ENCODE measurements at regions of chr17 and their contacts with region 1.

Region 1: GRCh38 chr17:7561028-7561575 is 617 bp upstream of the SENP3 start:
- DNase-seq: peak; percentile 93
- ATAC-seq: peak; percentile 65
- H3K4me3 Mint-ChIP-seq: peak overlapping the region; percentile 94
- H3K27ac Mint-ChIP-seq: peak overlapping the region; percentile 97
- H3K4me1 Mint-ChIP-seq: peaks cover 53% of the 10 kb centered on the region
- H3K27me3 Mint-ChIP-seq: no peaks in the 10 kb centered on the region
- CTCF ChIP-seq: peak; percentile 46; the same call in 1 of the 2 replicates

Region 2: DNA sequence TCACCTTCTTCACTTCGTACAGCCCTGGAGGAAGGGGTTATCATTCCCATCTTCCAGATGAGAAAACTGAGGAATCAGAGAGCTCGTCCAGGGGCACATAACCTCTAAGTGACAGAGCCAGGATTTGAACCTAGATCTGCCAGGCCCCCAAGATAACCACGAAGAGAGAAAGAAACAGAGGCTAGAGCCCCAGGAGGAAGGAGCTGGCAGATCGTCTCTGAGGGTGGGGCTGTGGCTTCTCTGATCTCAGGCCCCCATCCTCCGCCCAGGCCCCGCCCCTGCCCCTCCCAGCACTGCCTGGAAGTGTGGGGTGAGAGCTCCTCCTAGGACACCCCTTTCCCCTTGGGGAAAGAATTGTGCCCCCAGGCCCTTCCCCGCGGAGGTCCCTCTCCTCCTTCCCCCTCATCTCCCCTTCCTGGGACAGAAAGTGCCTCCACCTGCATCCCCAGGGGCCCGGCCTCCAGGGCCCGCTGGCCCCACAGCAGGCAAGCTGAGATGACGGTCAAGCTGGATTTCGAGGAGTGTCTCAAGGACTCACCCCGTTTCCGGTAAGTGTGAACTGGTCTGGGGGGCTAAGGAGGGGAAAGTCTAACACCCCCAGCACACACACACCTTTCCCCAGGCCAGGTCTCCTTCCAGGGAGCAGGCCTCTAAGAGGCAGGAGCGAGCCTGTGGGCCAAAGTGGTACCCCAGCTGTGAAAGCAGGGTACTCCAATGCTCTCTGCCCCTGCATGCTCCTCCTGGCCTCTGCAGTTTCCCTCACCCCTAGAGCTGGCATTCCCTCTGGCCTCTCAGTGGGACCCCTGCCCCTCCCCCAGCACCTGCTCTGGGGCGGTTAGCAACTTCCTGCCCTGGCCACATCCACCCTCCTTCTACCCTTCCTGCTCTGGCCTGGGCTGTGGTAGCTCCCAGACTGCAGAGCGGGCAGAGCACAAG is 224.6 kb before region 1 on chr17 and contains the start of gene ACAP1:
- CTCF ChIA-PET with region 1: interaction called, 12 read pairs
- POLR2A ChIA-PET with region 1: interaction called, 4 read pairs
- DNase-seq: peak; percentile 78
- ATAC-seq: peak; percentile 96
- H3K4me3 Mint-ChIP-seq: peak within 1 kb of the TSS; percentile 63
- H3K27ac Mint-ChIP-seq: peak within 1 kb of the TSS; percentile 98
- H3K4me1 Mint-ChIP-seq: peaks cover 34% of the 10 kb centered on the region
- H3K27me3 Mint-ChIP-seq: no peaks in the 10 kb centered on the region
- CTCF ChIP-seq: no peak
- total RNA-seq, gene ACAP1: 58.6 to 63.9 TPM (median 60.6 TPM) in 3 replicates

Region 3: DNA sequence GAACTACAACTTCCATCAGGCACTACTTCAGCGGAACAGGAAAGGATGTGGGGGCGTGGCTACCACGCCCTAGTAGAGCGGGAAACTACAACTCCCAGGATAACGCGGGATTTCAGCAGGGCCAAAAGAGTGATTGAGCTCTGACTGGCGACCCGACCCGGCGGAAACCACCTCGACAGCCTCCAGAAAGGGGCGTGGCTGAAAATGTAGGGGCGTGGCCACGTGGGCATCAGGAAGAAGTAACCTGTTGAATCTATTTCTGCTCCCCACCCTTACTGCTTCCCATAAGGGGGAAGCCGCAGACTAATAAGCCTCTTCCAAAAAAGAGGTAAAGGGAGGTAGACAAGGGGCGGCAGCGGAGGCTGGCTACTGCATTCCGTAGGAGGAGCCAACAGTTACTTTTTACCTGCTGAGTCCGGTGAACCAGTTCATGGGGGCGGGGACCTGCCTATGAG is 125.9 kb before region 1 on chr17 and contains the start of gene TMEM102:
- CTCF ChIA-PET with region 1: interaction called, 39 read pairs
- POLR2A ChIA-PET with region 1: interaction called, 3 read pairs
- DNase-seq: peak; percentile 98
- ATAC-seq: peak; percentile 71
- H3K4me3 Mint-ChIP-seq: peak within 1 kb of the TSS; percentile 90
- H3K27ac Mint-ChIP-seq: peak within 1 kb of the TSS; percentile 98
- H3K4me1 Mint-ChIP-seq: peaks cover 17% of the 10 kb centered on the region
- H3K27me3 Mint-ChIP-seq: peaks cover 17% of the 10 kb centered on the region
- CTCF ChIP-seq: no peak
- total RNA-seq, gene TMEM102: 13.5 to 15.3 TPM (median 13.9 TPM) in 3 replicates

Region 4: DNA sequence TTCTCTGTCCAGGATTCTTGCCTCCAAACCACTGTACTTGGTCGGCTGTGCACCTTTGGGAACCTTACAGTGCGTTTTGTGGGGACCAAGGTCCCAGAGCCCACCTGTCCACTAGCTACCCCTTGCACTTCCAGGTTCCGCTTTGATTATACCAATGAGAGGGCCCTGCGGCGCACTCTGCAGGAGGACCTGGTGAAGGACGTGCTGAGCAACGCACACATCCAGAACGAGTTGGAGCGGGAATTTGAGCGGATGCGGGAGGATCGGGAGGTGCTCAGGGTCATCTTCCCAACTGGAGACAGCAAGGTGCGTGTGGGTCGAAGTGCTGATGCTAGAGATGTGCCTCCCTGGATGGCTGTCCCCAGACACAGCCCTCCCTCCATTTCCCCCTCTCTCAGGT is 58.1 kb before region 1 on chr17:
- CTCF ChIA-PET with region 1: interaction called, 10 read pairs
- POLR2A ChIA-PET with region 1: interaction called, 4 read pairs
- DNase-seq: peak; percentile 66
- ATAC-seq: peak; percentile 82
- H3K4me3 Mint-ChIP-seq: no peak overlapping the region
- H3K27ac Mint-ChIP-seq: no peak overlapping the region
- H3K4me1 Mint-ChIP-seq: no peaks in the 10 kb centered on the region
- H3K27me3 Mint-ChIP-seq: no peaks in the 10 kb centered on the region
- CTCF ChIP-seq: no peak

Region 5: DNA sequence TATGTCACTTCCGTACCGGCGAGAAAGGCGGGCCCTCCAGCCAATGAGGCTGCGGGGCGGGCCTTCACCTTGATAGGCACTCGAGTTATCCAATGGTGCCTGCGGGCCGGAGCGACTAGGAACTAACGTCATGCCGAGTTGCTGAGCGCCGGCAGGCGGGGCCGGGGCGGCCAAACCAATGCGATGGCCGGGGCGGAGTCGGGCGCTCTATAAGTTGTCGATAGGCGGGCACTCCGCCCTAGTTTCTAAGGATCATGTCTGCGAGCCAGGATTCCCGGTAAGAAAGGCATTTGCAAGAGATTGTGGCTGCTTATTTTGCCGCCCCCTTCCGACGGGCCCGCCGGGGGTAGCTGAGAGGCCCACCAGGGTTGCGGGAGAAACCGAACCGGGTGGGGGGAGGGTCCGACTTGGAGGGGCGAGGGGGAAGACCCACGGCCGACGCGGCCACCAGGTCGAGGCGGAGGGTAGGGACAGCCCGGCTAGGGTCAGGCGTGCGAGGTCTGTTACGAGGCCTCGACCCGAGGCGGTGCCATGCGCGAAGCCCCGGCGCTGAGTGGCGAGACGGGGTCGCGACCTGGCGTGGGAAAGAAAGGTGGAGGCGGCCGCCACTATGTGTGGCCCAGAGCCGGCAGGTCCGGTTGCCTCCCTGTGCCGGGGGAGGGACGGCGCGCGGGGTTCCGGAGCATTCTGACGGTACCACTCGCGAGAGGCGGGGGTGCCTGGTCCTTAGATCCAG is 11.7 kb after region 1 on chr17:
- CTCF ChIA-PET with region 1: interaction called, 22 read pairs
- POLR2A ChIA-PET with region 1: interaction called, 4 read pairs
- DNase-seq: peak; percentile 100
- ATAC-seq: no peak; the same call in 1 of the 2 replicates
- H3K4me3 Mint-ChIP-seq: peak overlapping the region; percentile 93
- H3K27ac Mint-ChIP-seq: peak overlapping the region; percentile 100
- H3K4me1 Mint-ChIP-seq: peaks cover 46% of the 10 kb centered on the region
- H3K27me3 Mint-ChIP-seq: no peaks in the 10 kb centered on the region
- CTCF ChIP-seq: no peak

Region 6: DNA sequence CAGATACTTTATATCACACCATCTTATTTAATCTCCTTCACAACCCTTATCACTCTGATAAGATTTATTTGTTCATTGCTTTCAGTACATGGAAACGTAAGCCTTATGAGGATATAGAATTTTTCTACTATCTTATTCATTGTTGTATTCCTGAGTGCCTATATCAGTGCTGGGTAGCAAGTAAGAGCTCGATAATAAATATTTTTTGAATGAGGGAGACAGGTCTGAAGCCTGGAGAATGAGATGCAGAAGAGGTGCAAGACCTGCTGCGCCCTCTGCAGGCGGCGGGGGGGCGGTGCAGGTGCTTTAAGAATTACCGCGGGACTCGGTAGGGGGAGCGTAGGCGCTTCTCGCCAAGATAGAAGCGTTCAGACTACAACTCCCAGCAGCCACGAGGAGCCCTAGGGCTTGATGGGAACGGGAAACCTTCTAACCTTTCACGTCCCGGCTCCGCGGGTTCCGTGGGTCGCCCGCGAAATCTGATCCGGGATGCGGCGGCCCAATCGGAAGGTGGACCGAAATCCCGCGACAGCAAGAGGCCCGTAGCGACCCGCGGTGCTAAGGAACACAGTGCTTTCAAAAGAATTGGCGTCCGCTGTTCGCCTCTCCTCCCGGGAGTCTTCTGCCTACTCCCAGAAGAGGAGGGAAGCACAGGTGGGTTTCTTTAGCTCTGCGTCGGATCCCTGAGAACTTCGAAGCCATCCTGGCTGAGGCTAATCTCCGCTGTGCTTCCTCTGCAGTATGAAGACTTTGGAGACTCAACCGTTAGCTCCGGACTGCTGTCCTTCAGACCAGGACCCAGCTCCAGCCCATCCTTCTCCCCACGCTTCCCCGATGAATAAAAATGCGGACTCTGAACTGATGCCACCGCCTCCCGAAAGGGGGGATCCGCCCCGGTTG is 127.1 kb after region 1 on chr17 and contains the start of gene WRAP53:
- CTCF ChIA-PET with region 1: interaction called, 29 read pairs
- POLR2A ChIA-PET with region 1: interaction called, 8 read pairs
- DNase-seq: peak; percentile 98
- ATAC-seq: peak; percentile 89
- H3K4me3 Mint-ChIP-seq: peak within 1 kb of the TSS; percentile 88
- H3K27ac Mint-ChIP-seq: peak within 1 kb of the TSS; percentile 100
- H3K4me1 Mint-ChIP-seq: peaks cover 27% of the 10 kb centered on the region
- H3K27me3 Mint-ChIP-seq: no peaks in the 10 kb centered on the region
- CTCF ChIP-seq: peak; percentile 94
- total RNA-seq, gene WRAP53: 35.5 to 37.3 TPM (median 37.2 TPM) in 3 replicates

Measured in WTC11 (cell line).